ENCODE measurements at regions of chr3 and their contacts with region 1.

Region 1: GRCh38 chr3:126212602-126213378 is 32.4 kb upstream of the ALDH1L1 start:
- DNase-seq: peak in 1 of 2 donors; percentile 77
- H3K4me3 ChIP-seq: peak overlapping the region; percentile 41 to 69
- H3K27ac ChIP-seq: peak overlapping the region; percentile 86 to 89
- H3K4me1 ChIP-seq: peaks cover 9 to 33% of the 10 kb centered on the region in 2 donors
- H3K27me3 ChIP-seq: no peaks in the 10 kb centered on the region
- CTCF ChIP-seq: peak; percentile 43 to 70 (median 68)

Region 2: DNA sequence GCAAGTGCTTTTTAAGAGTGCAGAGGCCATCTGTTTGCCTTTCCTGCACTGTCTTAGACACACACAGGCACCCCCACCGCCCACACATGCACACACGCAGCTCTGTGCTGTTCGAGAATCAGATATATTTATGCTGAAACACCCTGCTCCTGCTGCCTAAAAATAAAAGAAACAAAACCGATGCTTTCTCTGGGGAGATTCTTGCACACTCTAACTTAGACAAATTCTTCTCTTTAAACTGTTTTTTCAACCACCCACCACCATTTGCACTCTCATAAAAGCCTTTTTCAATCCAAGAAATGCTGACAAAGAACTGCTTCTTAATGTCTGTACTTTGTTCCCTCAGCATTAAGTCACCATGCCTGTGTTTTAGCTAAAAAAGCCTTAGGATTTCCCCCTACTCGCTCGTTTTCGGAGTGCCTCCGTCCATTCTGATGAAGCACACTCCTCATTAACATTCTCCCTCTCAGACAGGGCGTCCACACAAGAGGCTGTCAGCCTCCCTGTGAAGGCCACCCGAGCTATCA is 1026.5 kb before region 1 on chr3:
- intact Hi-C with region 1: no loop called
- DNase-seq: no peak
- H3K4me3 ChIP-seq: no peak overlapping the region
- H3K27ac ChIP-seq: no peak overlapping the region
- H3K4me1 ChIP-seq: no peaks in the 10 kb centered on the region
- H3K27me3 ChIP-seq: no peaks in the 10 kb centered on the region
- CTCF ChIP-seq: no peak

Region 3: DNA sequence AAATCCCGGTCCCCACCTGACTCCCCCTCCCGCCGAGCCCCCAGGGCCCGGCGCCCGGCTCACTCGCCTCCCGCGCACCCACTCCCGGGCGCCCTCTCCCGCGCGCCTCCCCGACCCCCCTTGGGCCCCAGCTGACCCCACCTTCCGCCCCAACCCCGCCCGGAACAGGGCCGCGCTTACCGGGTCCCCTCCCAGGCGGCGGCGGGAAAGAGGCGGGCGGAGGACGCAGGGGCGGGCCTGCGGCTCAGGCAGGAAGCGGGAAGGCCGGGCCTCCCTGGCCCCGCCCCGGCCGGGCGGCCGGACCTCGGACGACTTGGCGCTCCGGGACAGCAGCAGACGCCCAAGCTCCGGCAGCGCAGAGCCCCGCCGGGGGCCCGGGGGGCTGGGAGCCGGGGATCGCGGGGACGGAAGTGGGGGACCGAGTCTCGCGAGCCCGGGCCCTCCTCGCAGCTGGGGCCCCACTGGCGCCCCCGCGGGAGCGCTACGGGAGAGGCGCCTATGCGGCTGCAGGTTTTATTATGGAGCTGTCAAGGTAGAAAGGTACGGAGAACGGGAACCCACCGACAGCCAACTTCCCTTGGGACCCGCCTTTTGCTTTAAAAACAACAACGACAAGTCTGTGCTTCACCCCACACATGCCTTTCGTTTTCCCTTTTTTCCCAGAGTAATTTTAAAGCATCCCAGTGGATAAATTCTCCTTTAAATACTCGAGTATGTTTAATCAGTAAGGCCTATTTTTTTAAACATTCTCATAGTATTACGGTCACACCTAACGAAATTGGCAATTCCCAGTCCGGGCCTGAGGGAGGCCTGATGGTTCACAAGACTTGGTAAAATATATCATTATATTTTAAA is 128.7 kb before region 1 on chr3 and contains the start of gene SLC41A3:
- intact Hi-C with region 1: loop called (anchors 2 kb)
- DNase-seq: peak; percentile 58 to 95
- H3K4me3 ChIP-seq: peak within 1 kb of the TSS; percentile 79 to 85
- H3K27ac ChIP-seq: peak within 1 kb of the TSS; percentile 93 to 94
- H3K4me1 ChIP-seq: peaks cover 0 to 4% of the 10 kb centered on the region in 2 donors
- H3K27me3 ChIP-seq: no peaks in the 10 kb centered on the region
- CTCF ChIP-seq: peak; percentile 33 to 49 (median 38)
- total RNA-seq, gene SLC41A3: 111 TPM

Region 4: DNA sequence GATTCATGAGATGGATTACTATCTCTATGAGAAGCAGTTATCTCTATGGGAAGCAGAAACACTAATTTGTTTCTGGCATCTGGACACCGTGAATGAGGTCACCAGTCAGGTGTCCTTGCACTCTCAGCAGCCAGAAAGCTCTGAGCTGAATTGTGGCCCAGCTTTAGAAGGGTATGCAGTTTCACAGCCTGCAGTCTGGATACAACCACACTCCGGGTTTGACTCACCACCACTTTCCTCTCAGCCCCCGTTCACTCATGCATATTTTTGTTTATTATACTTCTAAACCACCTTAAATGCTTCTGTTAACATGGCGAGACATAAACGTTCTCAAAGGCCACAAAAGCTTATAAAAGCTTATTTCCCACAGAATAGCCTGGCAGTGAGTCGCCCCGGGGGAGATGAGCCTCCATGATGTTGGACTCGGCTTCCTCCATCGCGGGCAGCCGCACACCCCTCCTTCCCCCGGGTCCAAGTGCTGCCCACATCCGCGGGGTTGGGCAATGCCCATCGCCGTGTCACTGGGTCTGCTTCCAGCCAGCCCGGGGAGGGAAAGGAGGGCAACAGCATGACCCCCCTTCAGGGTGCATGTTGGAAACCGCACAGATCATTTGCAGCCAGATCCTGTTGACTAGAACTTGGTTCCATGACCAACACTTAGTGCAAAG is 112.0 kb before region 1 on chr3:
- intact Hi-C with region 1: loop called (anchors 2 kb)
- DNase-seq: peak in 1 of 2 donors; percentile 86
- H3K4me3 ChIP-seq: peak overlapping the region in 1 of 2 donors; percentile 48
- H3K27ac ChIP-seq: peak overlapping the region; percentile 96 to 98
- H3K4me1 ChIP-seq: peaks cover 24 to 46% of the 10 kb centered on the region in 2 donors
- H3K27me3 ChIP-seq: no peaks in the 10 kb centered on the region
- CTCF ChIP-seq: no peak

Region 5: GRCh38 chr3:126197854-126198584 is 14.8 kb before region 1 on chr3:
- intact Hi-C with region 1: loop called (anchors 1 kb)
- DNase-seq: peak in 1 of 2 donors; percentile 90
- H3K4me3 ChIP-seq: no peak overlapping the region
- H3K27ac ChIP-seq: no peak overlapping the region
- H3K4me1 ChIP-seq: peaks cover 0 to 3% of the 10 kb centered on the region in 2 donors
- H3K27me3 ChIP-seq: no peaks in the 10 kb centered on the region
- CTCF ChIP-seq: peak; percentile 61 to 81 (median 76)

Region 6: GRCh38 chr3:126259411-126260391 is 46.9 kb after region 1 on chr3:
- intact Hi-C with region 1: loop called (anchors 1 kb)
- DNase-seq: peak; percentile 36 to 91
- H3K4me3 ChIP-seq: peak overlapping the region in 1 of 2 donors; percentile 40
- H3K27ac ChIP-seq: peak overlapping the region; percentile 55 to 72
- H3K4me1 ChIP-seq: peaks cover 4 to 11% of the 10 kb centered on the region in 2 donors
- H3K27me3 ChIP-seq: no peaks in the 10 kb centered on the region
- CTCF ChIP-seq: peak; percentile 84 to 85 (median 85)

Region 7: GRCh38 chr3:126267226-126267975 is 54.6 kb after region 1 on chr3:
- intact Hi-C with region 1: loop called (anchors 2 kb)
- DNase-seq: peak; percentile 32 to 96
- H3K4me3 ChIP-seq: peak overlapping the region; percentile 34 to 50
- H3K27ac ChIP-seq: peak overlapping the region; percentile 92 to 99
- H3K4me1 ChIP-seq: peaks cover 20 to 56% of the 10 kb centered on the region in 2 donors
- H3K27me3 ChIP-seq: no peaks in the 10 kb centered on the region
- CTCF ChIP-seq: peak in 2 of 3 experiments; percentile 31 to 38